Breast epithelium (tissue), 4 donors: ENCODE measurements at regions of chr2 and their contacts with region 1.

Region 1: DNA sequence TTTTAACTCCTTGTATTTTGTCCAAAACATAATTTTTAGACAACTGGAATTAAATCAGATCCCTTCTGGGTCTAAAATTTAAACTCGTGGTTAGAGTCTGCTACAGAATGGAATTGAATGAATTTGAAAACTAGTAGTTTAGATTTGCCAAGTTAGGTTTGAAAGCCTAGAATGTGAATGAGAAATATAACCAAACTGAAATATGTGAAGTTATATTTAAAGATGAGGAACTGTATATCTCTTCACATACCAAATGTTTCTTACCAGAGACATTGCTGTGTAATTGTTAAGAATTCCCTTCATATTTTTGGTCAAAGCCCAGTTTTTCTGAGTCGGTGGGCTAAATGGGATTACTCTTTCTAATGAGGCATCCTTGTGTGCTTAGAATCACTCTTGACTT is 74.2 kb downstream of the LPIN1 start:
- DNase-seq: no peak
- H3K4me3 ChIP-seq: no peak overlapping the region
- H3K27ac ChIP-seq: no peak overlapping the region
- H3K4me1 ChIP-seq: no peaks in the 10 kb centered on the region
- H3K27me3 ChIP-seq: no peaks in the 10 kb centered on the region
- CTCF ChIP-seq: no peak
- POLR2A ChIP-seq: no peak

Region 2: GRCh38 chr2:11757101-11757500 is 63.5 kb before region 1 on chr2:
- intact Hi-C with region 1: loop called (anchors 2 kb)
- DNase-seq: no peak
- H3K4me3 ChIP-seq: no peak overlapping the region
- H3K27ac ChIP-seq: no peak overlapping the region
- H3K4me1 ChIP-seq: peaks cover 8 to 15% of the 10 kb centered on the region in 2 donors
- H3K27me3 ChIP-seq: no peaks in the 10 kb centered on the region
- CTCF ChIP-seq: no peak
- POLR2A ChIP-seq: no peak